Activated CD4-positive, alpha-beta memory T cell treated with anti-CD3 and anti-CD28 coated beads for 36 hours (primary cell): ENCODE measurements at regions of chr2 and their contacts with region 1.

Region 1: DNA sequence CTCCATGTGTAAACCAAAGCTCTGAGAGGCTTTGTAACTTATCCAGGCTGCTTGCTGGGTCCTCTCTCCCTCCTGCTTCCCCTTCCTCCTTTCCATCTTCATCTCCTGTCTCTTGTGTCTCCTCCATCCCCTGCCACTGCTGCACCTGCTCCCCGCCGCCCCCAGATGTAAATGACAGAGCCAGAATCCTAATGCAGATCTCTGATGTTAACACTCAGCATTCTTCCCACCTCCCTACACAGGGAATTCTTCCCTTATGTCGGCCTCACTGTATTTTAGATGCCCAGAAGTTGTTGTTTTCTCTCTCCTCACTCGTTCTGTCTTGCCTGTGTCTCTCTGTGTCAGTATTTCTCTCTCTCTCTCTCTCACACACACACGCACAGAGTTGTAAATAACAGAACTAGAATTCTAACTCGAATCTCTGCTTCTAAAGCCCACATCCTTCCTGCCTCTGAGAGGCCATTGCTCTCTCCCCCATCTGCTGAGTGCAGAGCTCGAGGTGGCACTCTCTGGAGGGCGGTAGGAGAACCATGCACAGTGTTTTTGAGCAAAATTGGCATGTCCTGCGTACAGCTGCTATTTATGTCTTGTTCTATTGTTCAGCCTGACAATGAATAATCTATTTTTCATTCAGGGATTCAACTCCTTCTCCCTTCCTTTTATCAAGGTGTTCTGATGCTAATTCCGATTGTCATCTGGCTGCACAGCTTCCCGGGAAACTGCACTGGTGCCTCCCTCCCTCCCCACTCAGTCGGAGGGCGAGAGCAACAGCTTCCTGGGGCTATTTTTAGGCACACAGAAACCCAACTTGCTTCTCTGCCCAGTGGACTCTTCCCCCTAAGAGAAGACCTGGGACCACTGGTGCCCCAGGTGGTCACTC is 219.9 kb downstream of the SH3RF3 start:
- DNase-seq: peak; percentile 57
- H3K4me3 Mint-ChIP-seq: peak overlapping the region; percentile 1
- H3K27ac Mint-ChIP-seq: peak overlapping the region; percentile 43
- H3K4me1 Mint-ChIP-seq: peaks cover 29% of the 10 kb centered on the region
- H3K27me3 Mint-ChIP-seq: no peaks in the 10 kb centered on the region

Region 2: DNA sequence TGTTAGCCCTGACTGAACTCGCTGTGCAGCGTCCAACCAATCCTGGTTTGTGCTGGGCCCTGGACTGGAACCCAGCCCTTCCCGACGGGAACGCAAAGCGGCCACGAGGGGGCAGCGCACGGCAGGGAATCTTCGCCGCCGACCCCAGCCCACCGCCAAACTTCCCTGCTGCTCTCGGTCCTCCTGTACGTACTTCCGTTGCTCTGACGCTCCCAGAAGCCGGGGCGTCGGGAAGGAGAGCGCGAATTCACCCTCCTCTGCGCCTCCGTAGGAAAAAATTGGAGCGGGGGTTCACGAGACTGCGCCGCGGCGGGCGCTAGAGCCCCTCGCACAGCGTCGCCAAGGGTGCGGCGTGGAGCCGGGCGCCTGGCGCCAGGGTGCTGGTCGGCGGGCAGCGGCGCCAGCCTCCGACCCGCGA is 220.9 kb before region 1 on chr2:
- CTCF ChIA-PET with region 1: no interaction called
- POLR2A ChIA-PET with region 1: no interaction called
- intact Hi-C with region 1: loop called (anchors 5 kb)
- DNase-seq: peak; percentile 74
- H3K4me3 Mint-ChIP-seq: peak overlapping the region; percentile 68
- H3K27ac Mint-ChIP-seq: no peak overlapping the region
- H3K4me1 Mint-ChIP-seq: peaks cover 11% of the 10 kb centered on the region
- H3K27me3 Mint-ChIP-seq: peaks cover 38% of the 10 kb centered on the region

Region 3: DNA sequence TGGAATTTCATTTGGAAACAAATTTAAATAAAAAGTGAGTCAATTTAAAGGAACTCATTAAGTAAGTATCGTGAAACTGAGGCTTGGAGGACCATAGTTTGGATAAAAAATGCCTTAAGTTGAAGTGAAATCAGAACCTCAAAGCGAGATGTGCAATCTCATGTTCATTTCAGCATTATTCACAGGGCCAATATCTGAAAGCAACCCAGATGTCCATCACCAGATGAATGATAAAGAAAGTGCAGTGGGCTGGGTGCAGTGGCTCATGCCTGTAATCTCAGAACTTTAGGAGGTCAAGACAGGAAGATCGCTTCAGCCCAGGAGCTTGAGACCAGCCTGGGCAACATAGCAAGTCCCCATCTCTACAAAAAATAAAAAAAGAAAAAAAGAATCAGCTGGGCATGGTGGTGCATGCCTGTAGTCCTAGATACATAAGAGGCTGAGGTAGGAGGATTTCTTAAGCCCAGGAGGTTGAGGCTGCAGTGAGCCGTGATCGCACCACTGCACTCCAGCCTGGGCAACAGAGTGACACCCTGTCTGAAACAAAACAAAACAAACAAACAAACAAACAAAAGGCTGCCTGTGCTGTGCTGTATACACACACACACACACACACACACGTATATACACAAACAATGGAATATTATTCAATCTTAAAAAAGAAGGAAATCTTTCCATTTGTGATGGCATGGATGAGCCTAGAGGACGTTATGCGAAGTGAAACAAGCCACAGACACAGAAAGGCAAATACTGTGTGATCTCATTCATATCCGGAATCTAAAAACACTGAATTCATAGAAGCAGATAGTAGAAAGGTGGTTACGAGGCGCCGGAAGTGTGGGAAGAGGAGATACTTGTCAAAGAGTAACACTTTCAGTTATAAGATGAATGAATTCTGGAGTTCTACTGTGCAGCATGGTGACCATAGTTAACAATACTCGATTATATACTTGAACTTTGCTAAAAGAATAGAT is 205.4 kb before region 1 on chr2:
- CTCF ChIA-PET with region 1: no interaction called
- POLR2A ChIA-PET with region 1: no interaction called
- intact Hi-C with region 1: loop called (anchors 5 kb)
- DNase-seq: peak; percentile 88
- H3K4me3 Mint-ChIP-seq: peak overlapping the region; percentile 52
- H3K27ac Mint-ChIP-seq: peak overlapping the region; percentile 71
- H3K4me1 Mint-ChIP-seq: peaks cover 33% of the 10 kb centered on the region
- H3K27me3 Mint-ChIP-seq: peaks cover 62% of the 10 kb centered on the region

Region 4: GRCh38 chr2:109331896-109332848 is 16.7 kb before region 1 on chr2:
- CTCF ChIA-PET with region 1: no interaction called
- POLR2A ChIA-PET with region 1: no interaction called
- intact Hi-C with region 1: loop called (anchors 2 kb)
- DNase-seq: peak; percentile 45
- H3K4me3 Mint-ChIP-seq: peak overlapping the region; percentile 20
- H3K27ac Mint-ChIP-seq: no peak overlapping the region
- H3K4me1 Mint-ChIP-seq: peaks cover 21% of the 10 kb centered on the region
- H3K27me3 Mint-ChIP-seq: peaks cover 13% of the 10 kb centered on the region

Region 5: GRCh38 chr2:109644576-109645275 is 295.8 kb after region 1 on chr2:
- CTCF ChIA-PET with region 1: no interaction called
- POLR2A ChIA-PET with region 1: no interaction called
- intact Hi-C with region 1: no loop called
- DNase-seq: no peak
- H3K4me3 Mint-ChIP-seq: no peak overlapping the region
- H3K27ac Mint-ChIP-seq: no peak overlapping the region
- H3K4me1 Mint-ChIP-seq: no peaks in the 10 kb centered on the region
- H3K27me3 Mint-ChIP-seq: peaks cover 5% of the 10 kb centered on the region